ENCODE measurements at regions of chr12 and their contacts with region 1.

Region 1: DNA sequence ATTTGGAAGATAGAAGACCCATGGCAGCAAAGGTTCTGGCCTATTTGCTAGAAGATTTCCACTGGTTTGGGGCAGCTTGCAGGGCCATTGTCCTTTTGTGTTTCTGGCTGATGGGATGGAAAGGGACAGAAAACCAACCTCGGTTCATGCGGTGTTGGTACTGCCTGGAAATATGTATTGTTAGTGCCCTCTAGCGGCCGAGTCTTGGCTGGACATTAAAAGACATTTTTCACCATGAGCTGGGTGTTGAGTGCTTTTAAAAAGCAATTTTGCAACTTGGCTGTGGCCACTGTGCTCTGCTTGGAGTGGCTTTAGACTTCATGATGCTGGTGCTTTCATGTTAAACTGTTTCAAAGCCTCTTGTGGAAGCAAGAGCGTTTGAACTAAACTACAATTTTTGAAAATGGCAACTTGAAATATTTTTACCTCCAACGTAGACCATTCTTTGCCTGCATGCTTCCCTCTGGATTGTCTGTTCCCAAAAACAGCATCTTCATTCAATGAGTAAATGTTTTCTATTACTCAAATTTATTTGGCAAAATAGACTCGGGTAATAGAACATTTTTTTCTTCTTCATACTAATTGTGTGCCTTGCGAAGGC is 102.7 kb upstream of the TBX5 start:
- DNase-seq: peak; percentile 69 to 87
- H3K4me3 ChIP-seq: no peak overlapping the region
- H3K27ac ChIP-seq: no peak overlapping the region
- H3K4me1 ChIP-seq: no peaks in the 10 kb centered on the region
- H3K27me3 ChIP-seq: peaks cover 0 to 57% (median 4%) of the 10 kb centered on the region in 3 donors
- CTCF ChIP-seq: peak in 5 of 7 experiments; percentile 44 to 70 (median 53)
- EP300 ChIP-seq: no peak
- POLR2A ChIP-seq: no peak

Region 2: DNA sequence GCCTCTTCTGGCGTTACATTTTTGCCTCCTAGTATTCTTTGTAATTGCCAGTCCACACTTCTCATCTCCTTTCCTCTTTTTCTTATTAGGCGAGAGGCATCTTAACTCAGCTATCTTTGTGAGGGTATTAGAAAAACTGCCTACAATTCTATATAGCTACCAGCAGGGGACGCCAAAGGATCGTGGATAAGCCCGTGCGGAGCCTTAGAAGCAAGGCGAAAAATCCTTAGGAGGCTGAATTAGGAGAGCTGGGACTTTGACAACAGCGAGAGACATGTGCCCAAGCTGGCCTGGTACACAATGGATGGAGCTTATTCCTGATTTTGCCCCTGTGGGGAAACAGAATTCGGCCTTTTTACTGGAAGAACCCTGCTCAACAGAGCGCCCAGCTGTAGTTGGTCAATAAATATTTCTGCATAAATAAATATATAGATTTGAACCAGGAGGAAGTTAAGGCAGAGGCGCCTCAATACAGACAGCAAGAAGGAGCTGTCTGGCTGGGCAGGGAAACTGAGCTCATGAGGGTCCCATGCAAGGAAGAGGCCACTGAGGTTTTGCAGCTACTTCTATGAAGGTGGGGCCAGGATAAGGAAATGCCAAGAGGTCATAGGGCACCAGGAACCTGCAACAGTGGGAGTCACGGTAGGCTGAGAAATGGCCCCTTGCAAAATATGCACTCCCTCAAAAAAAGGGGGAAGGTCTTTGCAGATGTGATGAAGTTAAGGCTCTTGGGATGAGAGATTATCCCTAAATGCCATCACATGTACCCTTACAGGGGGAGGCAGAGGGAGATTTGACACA is 527.9 kb before region 1 on chr12:
- intact Hi-C with region 1: loop called (anchors 5 kb)
- DNase-seq: peak in 1 of 2 donors; percentile 85
- H3K4me3 ChIP-seq: no peak overlapping the region
- H3K27ac ChIP-seq: no peak overlapping the region
- H3K4me1 ChIP-seq: no peaks in the 10 kb centered on the region
- H3K27me3 ChIP-seq: peaks cover 0 to 77% (median 28%) of the 10 kb centered on the region in 3 donors
- CTCF ChIP-seq: peak in 5 of 7 experiments; percentile 67 to 89 (median 84)
- EP300 ChIP-seq: no peak
- POLR2A ChIP-seq: no peak